ENCODE measurements at regions of chr15 and their contacts with region 1.

Region 1: GRCh38 chr15:40782580-40783227 is 12.9 kb downstream of the C15orf62 start:
- DNase-seq: peak; percentile 90
- ATAC-seq: peak; percentile 89
- H3K4me3 Mint-ChIP-seq: no peak overlapping the region
- H3K27ac Mint-ChIP-seq: no peak overlapping the region
- H3K4me1 Mint-ChIP-seq: peaks cover 15% of the 10 kb centered on the region
- H3K27me3 Mint-ChIP-seq: no peaks in the 10 kb centered on the region

Region 2: DNA sequence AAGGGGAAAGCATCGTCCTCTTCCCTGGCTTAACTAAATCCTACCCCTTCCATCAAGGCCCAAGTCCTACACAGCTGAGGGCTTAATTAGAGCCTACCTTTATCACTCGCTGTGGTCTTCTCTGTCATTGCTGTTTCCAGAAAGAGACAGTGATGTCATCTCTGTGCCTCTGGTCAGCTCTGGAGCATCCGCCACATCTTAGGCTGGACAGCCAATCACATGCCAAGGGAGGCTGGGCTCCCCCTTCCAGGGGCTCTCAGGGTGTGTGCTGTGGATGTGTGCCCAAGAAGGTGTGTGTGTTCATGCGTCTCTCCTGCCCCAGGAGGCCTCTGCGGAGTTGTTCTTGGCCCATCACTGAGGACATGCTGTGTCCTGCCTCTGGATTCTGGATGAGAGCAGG is 269.1 kb before region 1 on chr15:
- CTCF ChIA-PET with region 1: interaction called, 3 read pairs
- POLR2A ChIA-PET with region 1: no interaction called
- intact Hi-C with region 1: loop called in 1 of 2 experiments (anchors 2 kb)
- DNase-seq: no peak
- ATAC-seq: no peak
- H3K4me3 Mint-ChIP-seq: no peak overlapping the region
- H3K27ac Mint-ChIP-seq: no peak overlapping the region
- H3K4me1 Mint-ChIP-seq: peaks cover 7% of the 10 kb centered on the region
- H3K27me3 Mint-ChIP-seq: peaks cover 38% of the 10 kb centered on the region

Region 3: DNA sequence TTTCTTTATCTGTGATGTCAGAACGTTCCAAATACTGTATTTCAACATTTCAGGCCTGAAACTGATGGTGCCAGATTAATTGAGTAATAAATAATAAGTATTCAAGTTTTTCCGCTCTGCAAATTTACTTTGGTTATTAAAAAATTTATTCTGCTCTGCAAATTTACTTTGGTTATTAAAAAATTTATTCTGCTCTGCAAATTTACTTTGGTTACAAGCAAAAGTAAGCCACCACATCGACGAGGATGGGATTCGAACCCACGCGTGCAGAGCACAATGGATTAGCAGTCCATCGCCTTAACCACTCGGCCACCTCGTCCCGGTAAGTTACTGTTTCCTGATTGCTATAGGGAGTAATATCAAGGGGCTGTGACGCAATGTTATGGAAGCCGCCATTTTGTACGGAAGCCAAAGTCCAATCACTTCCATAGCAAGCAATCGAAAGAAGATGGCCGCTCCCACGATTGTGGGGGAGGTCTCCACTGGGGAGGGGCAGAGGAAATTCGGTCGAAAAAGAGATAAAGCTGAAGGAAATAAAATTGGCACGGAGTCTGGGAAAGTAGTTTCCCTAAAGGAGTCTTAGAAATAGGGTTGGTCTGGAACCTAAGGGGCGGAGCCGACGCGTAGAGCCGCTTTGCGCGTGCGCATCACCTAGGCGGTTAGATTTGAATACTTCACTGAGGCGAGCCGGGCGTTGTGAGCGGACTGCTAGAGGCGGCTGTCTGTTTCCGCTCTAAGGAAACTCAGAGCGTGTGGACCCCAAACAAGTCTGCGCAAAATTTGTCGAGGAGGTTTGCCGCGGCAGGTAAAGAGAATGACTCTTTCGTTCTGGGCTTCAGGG is 188.9 kb before region 1 on chr15 and contains the start of gene KNL1:
- CTCF ChIA-PET with region 1: interaction called, 15 read pairs
- POLR2A ChIA-PET with region 1: interaction called, 3 read pairs
- intact Hi-C with region 1: loop called (anchors 2 to 10 kb)
- DNase-seq: peak; percentile 94
- ATAC-seq: peak; percentile 86
- H3K4me3 Mint-ChIP-seq: peak within 1 kb of the TSS; percentile 87
- H3K27ac Mint-ChIP-seq: peak within 1 kb of the TSS; percentile 95
- H3K4me1 Mint-ChIP-seq: peaks cover 24% of the 10 kb centered on the region
- H3K27me3 Mint-ChIP-seq: peaks cover 6% of the 10 kb centered on the region
- total RNA-seq, gene KNL1: 26.2 to 33.5 TPM

Region 4: DNA sequence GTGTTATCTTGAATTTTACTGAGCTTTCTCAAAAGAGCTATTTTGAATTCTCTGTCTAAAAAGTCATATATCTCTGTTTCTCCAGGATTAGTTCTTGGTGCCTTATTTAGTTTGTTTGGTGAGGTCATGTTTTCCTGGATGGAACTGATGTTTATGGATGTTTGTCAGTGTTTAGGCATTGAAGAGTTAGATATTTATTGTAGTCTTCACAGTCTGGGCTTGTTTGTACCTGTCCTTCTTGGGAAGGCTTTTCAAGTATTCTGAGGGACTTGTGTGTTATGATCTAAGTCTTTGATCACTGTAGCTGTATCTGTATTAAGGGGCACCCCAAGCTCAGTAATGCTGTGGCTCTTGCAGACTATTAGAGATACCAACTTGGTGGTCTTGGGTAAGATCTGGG is 98.3 kb before region 1 on chr15:
- CTCF ChIA-PET with region 1: interaction called, 15 read pairs
- POLR2A ChIA-PET with region 1: no interaction called
- intact Hi-C with region 1: loop called (anchors 1 kb)
- DNase-seq: no peak
- ATAC-seq: no peak
- H3K4me3 Mint-ChIP-seq: no peak overlapping the region
- H3K27ac Mint-ChIP-seq: no peak overlapping the region
- H3K4me1 Mint-ChIP-seq: no peaks in the 10 kb centered on the region
- H3K27me3 Mint-ChIP-seq: no peaks in the 10 kb centered on the region

Region 5: GRCh38 chr15:40722934-40723333 is 59.8 kb before region 1 on chr15:
- CTCF ChIA-PET with region 1: interaction called, 4 read pairs
- POLR2A ChIA-PET with region 1: no interaction called
- intact Hi-C with region 1: loop called in 1 of 2 experiments (anchors 2 kb)
- DNase-seq: no peak
- ATAC-seq: peak; percentile 76
- H3K4me3 Mint-ChIP-seq: no peak overlapping the region
- H3K27ac Mint-ChIP-seq: no peak overlapping the region
- H3K4me1 Mint-ChIP-seq: peaks cover 14% of the 10 kb centered on the region
- H3K27me3 Mint-ChIP-seq: no peaks in the 10 kb centered on the region

Region 6: GRCh38 chr15:40743921-40744814 is 38.5 kb before region 1 on chr15:
- CTCF ChIA-PET with region 1: interaction called, 9 read pairs
- POLR2A ChIA-PET with region 1: no interaction called
- intact Hi-C with region 1: loop called (anchors 1 to 2 kb)
- DNase-seq: peak; percentile 82
- ATAC-seq: peak; percentile 93
- H3K4me3 Mint-ChIP-seq: peak overlapping the region; percentile 4
- H3K27ac Mint-ChIP-seq: peak overlapping the region; percentile 71
- H3K4me1 Mint-ChIP-seq: peaks cover 25% of the 10 kb centered on the region
- H3K27me3 Mint-ChIP-seq: no peaks in the 10 kb centered on the region

Region 7: GRCh38 chr15:40769274-40770146 is 13.2 kb before region 1 on chr15 and contains the start of gene C15orf62:
- CTCF ChIA-PET with region 1: interaction called, 45 read pairs
- POLR2A ChIA-PET with region 1: interaction called, 3 read pairs
- intact Hi-C with region 1: loop called in 1 of 2 experiments (anchors 2 kb)
- DNase-seq: peak; percentile 78
- ATAC-seq: peak; percentile 73
- H3K4me3 Mint-ChIP-seq: peak within 1 kb of the TSS; percentile 32
- H3K27ac Mint-ChIP-seq: peak within 1 kb of the TSS; percentile 88
- H3K4me1 Mint-ChIP-seq: peaks cover 37% of the 10 kb centered on the region
- H3K27me3 Mint-ChIP-seq: no peaks in the 10 kb centered on the region
- total RNA-seq, gene C15orf62: 0.58 to 0.80 TPM

Region 8: DNA sequence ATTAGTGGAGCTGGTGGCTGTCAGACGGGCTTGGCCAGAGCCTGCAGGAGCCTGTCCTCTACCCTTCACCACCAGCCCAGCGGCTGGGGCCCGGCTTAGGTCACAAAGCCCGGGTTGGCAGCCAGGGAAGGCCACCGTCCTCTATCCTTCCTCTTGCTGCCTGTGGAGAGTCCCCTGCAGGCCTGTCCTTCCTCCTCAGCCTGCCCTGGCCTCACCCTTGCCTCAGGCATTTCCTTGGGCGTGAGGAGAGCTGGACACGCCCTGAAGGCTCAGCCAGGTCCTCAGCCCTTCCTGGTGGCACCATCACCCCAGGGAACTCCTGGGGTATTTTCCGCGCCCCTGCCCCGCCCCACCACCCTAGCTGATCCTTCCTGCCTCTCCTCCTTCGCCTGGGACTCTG is 178.2 kb after region 1 on chr15:
- CTCF ChIA-PET with region 1: no interaction called
- POLR2A ChIA-PET with region 1: no interaction called
- intact Hi-C with region 1: no loop called
- DNase-seq: no peak
- ATAC-seq: no peak
- H3K4me3 Mint-ChIP-seq: no peak overlapping the region
- H3K27ac Mint-ChIP-seq: no peak overlapping the region
- H3K4me1 Mint-ChIP-seq: peaks cover 6% of the 10 kb centered on the region
- H3K27me3 Mint-ChIP-seq: no peaks in the 10 kb centered on the region

Measured in activated CD4-positive, alpha-beta T cell treated with anti-CD3 and anti-CD28 coated beads for 36 hours (primary cell).